HCT116 (cell line): ENCODE measurements at regions of chr1 and their contacts with region 1.

Region 1: DNA sequence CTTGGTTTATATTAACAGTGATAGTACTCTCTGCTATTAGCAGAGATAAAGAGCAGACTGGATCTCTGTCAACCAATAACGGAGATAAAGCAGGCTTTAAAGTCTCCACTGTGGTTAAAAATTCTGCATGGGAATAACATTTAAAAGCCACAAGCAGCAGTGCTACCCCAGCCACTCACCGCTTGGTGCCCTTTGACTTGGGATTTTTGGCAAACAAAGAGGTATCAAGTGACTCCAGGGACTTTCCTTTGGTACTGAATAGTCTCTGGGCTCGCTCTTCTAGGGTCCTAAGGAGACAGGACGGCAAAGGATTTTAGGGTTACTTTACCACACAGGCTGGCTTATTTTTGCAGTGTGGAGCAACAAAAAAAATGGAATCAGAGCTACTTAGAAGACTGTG is 11.3 kb downstream of the SF3A3 start:
- DNase-seq: no peak
- ATAC-seq: no peak
- H3K4me3 ChIP-seq: no peak overlapping the region
- H3K27ac ChIP-seq: no peak overlapping the region
- H3K4me1 ChIP-seq: no peaks in the 10 kb centered on the region
- H3K27me3 ChIP-seq: no peaks in the 10 kb centered on the region
- CTCF ChIP-seq: no peak
- POLR2A ChIP-seq: no peak
- RAD21 ChIP-seq: no peak

Region 2: DNA sequence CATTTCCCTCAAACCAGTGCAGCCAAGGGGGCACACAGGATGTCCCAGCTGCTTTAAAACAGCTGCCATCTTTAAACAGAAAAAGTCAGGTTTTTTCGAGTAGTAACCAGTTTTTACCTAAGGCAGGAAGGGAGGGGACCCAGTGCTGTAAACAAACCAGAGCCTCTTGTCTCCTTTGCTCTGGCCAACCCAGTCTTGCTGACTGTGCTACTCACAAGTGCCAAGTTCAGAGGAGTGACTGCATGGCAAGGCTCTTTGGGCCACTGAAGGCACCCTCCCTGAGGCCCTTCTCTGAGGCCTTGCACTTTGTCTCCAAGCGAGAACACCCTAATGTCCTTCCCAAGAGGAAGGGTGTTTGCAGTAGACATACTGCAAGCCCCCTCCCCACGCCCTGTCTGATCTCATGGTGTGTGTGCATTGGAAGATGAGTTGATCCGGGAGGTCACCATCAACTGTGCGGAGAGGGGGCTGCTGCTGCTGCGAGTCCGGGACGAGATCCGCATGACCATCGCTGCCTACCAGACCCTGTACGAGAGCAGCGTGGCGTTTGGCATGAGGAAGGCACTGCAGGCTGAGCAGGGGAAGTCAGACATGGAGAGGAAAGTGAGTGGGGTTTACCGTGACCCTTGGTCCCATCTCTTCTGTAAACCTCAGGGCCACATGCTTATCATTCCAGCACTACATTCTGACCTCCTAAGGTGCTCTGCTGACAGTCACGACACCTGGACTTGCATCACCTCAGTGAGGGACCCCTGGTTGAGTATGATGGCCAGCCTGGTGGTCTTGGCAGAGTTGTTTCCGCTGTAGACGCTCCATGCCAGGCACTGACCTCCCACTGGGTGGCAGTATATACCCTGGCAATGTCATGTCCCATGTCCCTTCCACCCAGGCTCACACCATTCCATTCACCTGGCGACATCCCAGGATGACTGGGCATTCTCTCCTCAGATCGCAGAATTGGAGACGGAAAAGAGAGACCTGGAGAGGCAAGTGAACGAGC is 417.1 kb before region 1 on chr1:
- CTCF ChIA-PET with region 1: no interaction called
- POLR2A ChIA-PET with region 1: no interaction called
- RAD21 ChIA-PET with region 1: no interaction called
- intact Hi-C with region 1: loop called (anchors 10 kb)
- DNase-seq: peak; percentile 35
- ATAC-seq: peak; percentile 88
- H3K4me3 ChIP-seq: no peak overlapping the region
- H3K27ac ChIP-seq: no peak overlapping the region
- H3K4me1 ChIP-seq: peaks cover 5% of the 10 kb centered on the region in 2 experiments
- H3K27me3 ChIP-seq: no peaks in the 10 kb centered on the region
- CTCF ChIP-seq: peak; percentile 62 to 90 (median 89)
- POLR2A ChIP-seq: no peak
- RAD21 ChIP-seq: peak; percentile 84

Region 3: GRCh38 chr1:37807555-37808368 is 170.8 kb before region 1 on chr1 and contains the starts of genes C1orf122 and YRDC:
- CTCF ChIA-PET with region 1: no interaction called
- POLR2A ChIA-PET with region 1: no interaction called
- RAD21 ChIA-PET with region 1: no interaction called
- intact Hi-C with region 1: loop called (anchors 5 kb)
- DNase-seq: peak; percentile 77
- ATAC-seq: peak; percentile 84
- H3K4me3 ChIP-seq: peak within 1 kb of the TSS; percentile 78 to 98
- H3K27ac ChIP-seq: peak within 1 kb of the TSS; percentile 93
- H3K4me1 ChIP-seq: peaks cover 16 to 37% of the 10 kb centered on the region in 2 experiments
- H3K27me3 ChIP-seq: no peaks in the 10 kb centered on the region
- CTCF ChIP-seq: no peak
- POLR2A ChIP-seq: peak; percentile 71
- RAD21 ChIP-seq: no peak
- total RNA-seq, gene C1orf122: 34.2 TPM
- total RNA-seq, gene YRDC: 41.4 TPM

Region 4: GRCh38 chr1:37822906-37823815 is 155.4 kb before region 1 on chr1:
- CTCF ChIA-PET with region 1: no interaction called
- POLR2A ChIA-PET with region 1: no interaction called
- RAD21 ChIA-PET with region 1: no interaction called
- intact Hi-C with region 1: no loop called
- DNase-seq: no peak
- ATAC-seq: no peak
- H3K4me3 ChIP-seq: no peak overlapping the region
- H3K27ac ChIP-seq: no peak overlapping the region
- H3K4me1 ChIP-seq: peaks cover 0 to 10% of the 10 kb centered on the region in 2 experiments; a peak in 2 of 4 replicates
- H3K27me3 ChIP-seq: no peaks in the 10 kb centered on the region
- CTCF ChIP-seq: no peak
- POLR2A ChIP-seq: no peak
- RAD21 ChIP-seq: no peak

Region 5: GRCh38 chr1:37890378-37891014 is 88.0 kb before region 1 on chr1:
- CTCF ChIA-PET with region 1: no interaction called
- POLR2A ChIA-PET with region 1: no interaction called
- RAD21 ChIA-PET with region 1: no interaction called
- intact Hi-C with region 1: loop called (anchors 1 kb)
- DNase-seq: peak; percentile 23
- ATAC-seq: peak; percentile 74
- H3K4me3 ChIP-seq: no peak overlapping the region
- H3K27ac ChIP-seq: no peak overlapping the region
- H3K4me1 ChIP-seq: no peaks in the 10 kb centered on the region
- H3K27me3 ChIP-seq: no peaks in the 10 kb centered on the region
- CTCF ChIP-seq: peak; percentile 50 to 74 (median 60); a peak in 5 of 6 replicates
- POLR2A ChIP-seq: no peak
- RAD21 ChIP-seq: peak; percentile 75

Region 6: GRCh38 chr1:38173157-38173831 is 194.8 kb after region 1 on chr1:
- CTCF ChIA-PET with region 1: no interaction called
- POLR2A ChIA-PET with region 1: no interaction called
- RAD21 ChIA-PET with region 1: no interaction called
- intact Hi-C with region 1: no loop called
- DNase-seq: no peak
- ATAC-seq: no peak
- H3K4me3 ChIP-seq: no peak overlapping the region
- H3K27ac ChIP-seq: no peak overlapping the region
- H3K4me1 ChIP-seq: no peaks in the 10 kb centered on the region
- H3K27me3 ChIP-seq: 0 out of 2 replicates have a peak, but pooled peaks cover 7% of the 10 kb centered on the region
- CTCF ChIP-seq: no peak
- POLR2A ChIP-seq: no peak
- RAD21 ChIP-seq: no peak